Activated naive CD4-positive, alpha-beta T cell treated with anti-CD3 and anti-CD28 coated beads for 36 hours (primary cell): ENCODE measurements at regions of chr17 and their contacts with region 1.

Region 1: GRCh38 chr17:7306911-7307686 is at the start of gene EIF5A:
- DNase-seq: peak; percentile 100
- H3K4me3 Mint-ChIP-seq: peak within 1 kb of the TSS; percentile 86
- H3K27ac Mint-ChIP-seq: peak within 1 kb of the TSS; percentile 96
- H3K4me1 Mint-ChIP-seq: peaks cover 35% of the 10 kb centered on the region
- H3K27me3 Mint-ChIP-seq: no peaks in the 10 kb centered on the region
- total RNA-seq, gene EIF5A: 757 to 792 TPM

Region 2: DNA sequence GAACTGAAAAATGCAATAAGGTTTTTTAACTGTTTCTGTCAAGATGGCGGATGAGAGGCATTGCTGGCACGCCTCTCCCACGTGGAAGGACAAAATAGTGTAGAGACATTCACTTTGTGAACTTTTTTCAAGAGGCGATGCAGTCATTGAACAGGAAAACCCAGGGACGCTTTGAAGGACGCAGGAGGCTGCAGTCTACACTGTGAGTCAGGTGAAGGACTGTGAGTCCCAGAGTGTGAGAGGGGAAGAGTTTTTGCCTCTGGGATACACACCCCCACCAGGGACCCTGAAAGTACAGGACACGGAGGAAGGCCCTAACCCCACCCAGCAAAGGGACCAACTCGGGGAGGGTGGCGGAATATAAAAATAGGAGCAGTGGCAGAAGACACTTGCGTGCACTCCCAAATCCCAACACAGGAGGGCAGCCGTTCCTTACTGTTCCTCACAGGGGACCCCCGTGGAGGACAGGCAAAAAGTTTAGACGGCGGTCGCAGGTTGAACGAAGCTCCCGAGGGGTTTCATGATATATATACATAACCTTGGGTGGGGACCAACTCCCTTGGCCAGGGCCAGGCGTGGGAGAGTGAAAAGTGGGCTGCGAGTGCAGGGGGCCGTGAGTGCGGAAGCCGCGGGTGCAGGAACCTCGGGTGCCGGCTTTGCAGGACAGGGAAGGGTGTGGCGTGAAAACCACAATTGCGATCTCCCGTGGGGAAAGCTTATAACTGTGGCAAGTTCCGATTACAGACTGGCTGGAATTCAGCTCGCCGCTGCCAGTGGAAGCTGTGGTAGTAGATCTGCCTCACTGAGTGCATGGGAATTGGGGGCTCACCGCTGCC is 393.3 kb before region 1 on chr17:
- CTCF ChIA-PET with region 1: no interaction called
- intact Hi-C with region 1: loop called (anchors 5 kb)
- DNase-seq: peak; percentile 85
- H3K4me3 Mint-ChIP-seq: peak overlapping the region; percentile 70
- H3K27ac Mint-ChIP-seq: peak overlapping the region; percentile 16
- H3K4me1 Mint-ChIP-seq: peaks cover 16% of the 10 kb centered on the region
- H3K27me3 Mint-ChIP-seq: peaks cover 14% of the 10 kb centered on the region

Region 3: DNA sequence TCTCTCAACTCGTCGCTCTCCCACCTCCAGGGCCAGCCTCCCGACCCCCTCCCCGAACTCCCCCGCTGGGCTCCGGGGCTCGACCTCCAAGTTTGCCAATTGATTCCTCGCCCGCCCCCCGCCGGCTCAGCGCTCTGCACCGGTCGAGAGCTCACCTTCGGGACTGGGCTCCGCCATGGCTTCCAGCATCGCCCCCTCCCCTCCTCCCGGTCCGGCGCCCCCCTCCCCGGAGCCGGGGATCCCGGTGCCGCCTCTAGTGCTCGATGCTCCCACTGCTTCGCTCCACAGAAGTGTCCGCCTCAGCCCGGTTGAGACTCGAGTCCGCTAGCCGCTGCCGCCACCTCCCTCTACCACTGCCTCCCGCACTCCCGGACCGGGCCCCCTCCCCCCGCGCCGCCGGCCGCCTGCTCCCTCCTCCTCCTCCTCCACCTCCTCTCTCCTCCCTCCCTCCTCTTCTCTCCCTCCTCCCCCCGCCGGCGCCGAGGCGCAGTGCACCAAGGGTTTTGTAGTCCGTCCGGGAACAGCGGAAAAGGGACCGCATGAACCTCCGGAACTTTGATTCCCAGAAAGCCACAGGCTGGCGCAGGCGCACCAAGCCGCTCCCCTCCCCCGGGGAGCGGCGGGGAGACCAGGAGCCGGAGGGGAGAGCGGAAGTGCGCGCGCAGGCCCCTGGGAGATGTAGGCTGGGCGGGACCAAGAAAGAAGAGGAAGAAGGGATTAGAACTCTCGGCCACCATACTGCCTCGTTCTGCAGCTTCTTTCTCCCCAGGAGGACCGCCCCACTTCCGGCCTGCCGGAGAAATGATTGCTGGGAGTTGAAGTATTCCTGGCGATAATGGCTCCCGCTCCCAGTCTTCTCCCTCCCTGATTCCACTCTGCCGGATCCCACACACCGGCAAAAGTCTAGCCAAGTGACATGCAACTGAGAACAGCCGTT is 67.7 kb before region 1 on chr17 and contains the start of gene PHF23:
- CTCF ChIA-PET with region 1: interaction called, 3 read pairs
- intact Hi-C with region 1: loop called (anchors 1 kb)
- DNase-seq: peak; percentile 99
- H3K4me3 Mint-ChIP-seq: peak within 1 kb of the TSS; percentile 94
- H3K27ac Mint-ChIP-seq: peak within 1 kb of the TSS; percentile 98
- H3K4me1 Mint-ChIP-seq: peaks cover 64% of the 10 kb centered on the region
- H3K27me3 Mint-ChIP-seq: no peaks in the 10 kb centered on the region
- total RNA-seq, gene PHF23: 8.4 to 10.0 TPM

Region 4: GRCh38 chr17:7329374-7329996 is 22.4 kb after region 1 on chr17:
- CTCF ChIA-PET with region 1: interaction called, 5 read pairs
- intact Hi-C with region 1: loop called (anchors 1 kb)
- DNase-seq: peak; percentile 98
- H3K4me3 Mint-ChIP-seq: peak overlapping the region; percentile 97
- H3K27ac Mint-ChIP-seq: peak overlapping the region; percentile 91
- H3K4me1 Mint-ChIP-seq: peaks cover 54% of the 10 kb centered on the region
- H3K27me3 Mint-ChIP-seq: no peaks in the 10 kb centered on the region

Region 5: GRCh38 chr17:7435221-7435675 is 128.1 kb after region 1 on chr17 and contains the start of gene TMEM102:
- CTCF ChIA-PET with region 1: interaction called, 3 read pairs
- intact Hi-C with region 1: loop called (anchors 1 kb)
- DNase-seq: peak; percentile 99
- H3K4me3 Mint-ChIP-seq: peak within 1 kb of the TSS; percentile 92
- H3K27ac Mint-ChIP-seq: peak within 1 kb of the TSS; percentile 91
- H3K4me1 Mint-ChIP-seq: peaks cover 36% of the 10 kb centered on the region
- H3K27me3 Mint-ChIP-seq: peaks cover 12% of the 10 kb centered on the region
- total RNA-seq, gene TMEM102: 3.3 to 3.5 TPM

Region 6: DNA sequence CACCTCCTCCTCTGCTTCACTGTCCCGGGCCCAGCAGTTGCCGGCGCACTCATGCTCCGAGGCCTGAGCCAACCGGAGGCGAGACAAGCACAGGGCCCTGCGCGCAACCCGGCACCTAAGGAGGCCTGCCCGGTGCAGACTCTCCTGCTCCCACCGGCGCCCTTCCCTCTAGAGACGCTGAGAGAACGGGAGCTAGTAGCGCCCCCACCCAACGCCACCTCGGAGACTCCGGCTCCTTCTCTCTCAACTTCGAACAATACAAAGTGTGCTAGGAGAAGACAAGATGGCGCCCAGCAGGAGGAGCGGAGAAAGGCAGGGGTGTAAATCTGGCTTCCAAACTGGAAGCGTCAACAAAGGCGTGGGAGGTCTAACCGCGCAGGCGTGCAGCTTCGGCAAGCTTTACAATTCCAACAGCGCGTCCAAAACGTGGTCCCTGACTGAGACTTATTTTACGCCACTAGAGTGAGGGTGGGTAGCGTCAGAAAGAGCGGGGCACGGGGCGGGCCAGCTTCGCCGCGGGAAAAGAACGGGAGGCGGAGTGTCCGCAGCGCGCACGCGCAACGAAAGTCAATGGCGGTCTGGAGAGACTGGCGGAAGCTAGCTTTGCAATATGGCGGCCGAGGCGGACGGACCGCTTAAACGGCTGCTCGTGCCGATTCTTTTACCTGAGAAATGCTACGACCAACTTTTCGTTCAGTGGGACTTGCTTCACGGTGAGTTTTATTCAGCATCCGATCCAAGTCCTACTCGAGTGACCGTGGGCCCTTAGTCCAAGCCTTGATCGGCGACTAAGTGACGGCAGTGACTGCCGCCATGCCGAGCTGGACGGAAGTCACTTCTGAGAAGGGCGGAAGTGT is 276.4 kb after region 1 on chr17 and contains the start of gene MPDU1:
- CTCF ChIA-PET with region 1: no interaction called
- intact Hi-C with region 1: loop called (anchors 1 kb)
- DNase-seq: peak; percentile 96
- H3K4me3 Mint-ChIP-seq: peak within 1 kb of the TSS; percentile 95
- H3K27ac Mint-ChIP-seq: peak within 1 kb of the TSS; percentile 100
- H3K4me1 Mint-ChIP-seq: peaks cover 58% of the 10 kb centered on the region
- H3K27me3 Mint-ChIP-seq: no peaks in the 10 kb centered on the region
- total RNA-seq, gene MPDU1: 48.8 to 53.5 TPM

Region 7: DNA sequence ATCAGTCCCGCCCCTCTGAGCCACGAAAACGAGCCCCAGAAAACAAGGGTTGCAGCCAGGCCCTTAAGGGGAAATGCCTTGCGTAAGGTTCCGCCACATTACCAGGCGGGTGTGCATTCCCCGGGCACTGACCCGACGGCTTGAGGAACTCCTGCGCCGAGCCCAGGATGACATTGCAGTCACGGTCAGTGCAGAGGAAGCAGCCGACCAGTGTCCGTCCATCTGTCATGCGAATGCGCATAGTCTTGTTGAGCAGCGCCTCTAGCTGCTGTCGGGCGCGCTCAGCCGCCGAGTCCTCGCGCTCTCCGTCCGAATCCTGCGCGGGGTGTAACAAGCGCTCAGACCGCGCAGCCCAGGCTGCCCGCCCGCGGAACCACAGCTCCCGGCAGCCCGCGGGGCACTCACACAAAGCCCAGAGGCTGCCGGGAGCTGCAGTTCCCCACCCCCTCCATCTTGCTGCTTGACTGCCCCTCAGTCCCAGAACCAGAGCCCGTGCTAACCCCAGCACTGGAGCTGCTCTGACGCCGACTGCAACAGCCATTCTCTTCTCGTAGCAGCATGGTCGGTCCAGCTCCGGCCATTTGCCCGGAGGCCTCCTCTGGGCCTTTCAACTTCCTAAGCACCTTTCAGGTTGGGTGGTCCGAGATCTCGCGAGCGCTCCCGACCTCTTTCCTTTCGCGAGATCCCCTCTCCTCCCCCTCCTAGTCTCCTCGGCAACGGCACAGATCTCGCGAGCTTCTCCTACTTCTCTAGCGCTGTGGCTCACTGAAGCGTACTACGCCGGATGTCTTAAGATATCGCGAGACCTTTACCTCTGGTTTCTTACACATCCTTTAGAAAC is 550.0 kb after region 1 on chr17 and contains the start of gene NAA38:
- CTCF ChIA-PET with region 1: no interaction called
- intact Hi-C with region 1: loop called (anchors 5 kb)
- DNase-seq: peak; percentile 98
- H3K4me3 Mint-ChIP-seq: no peak within 1 kb of the TSS
- H3K27ac Mint-ChIP-seq: no peak within 1 kb of the TSS
- H3K4me1 Mint-ChIP-seq: peaks cover 22% of the 10 kb centered on the region
- H3K27me3 Mint-ChIP-seq: no peaks in the 10 kb centered on the region
- total RNA-seq, gene NAA38: 75.0 to 75.3 TPM